Heart left ventricle (tissue), 16 donors: ENCODE measurements at regions of chr11 and their contacts with region 1.

Region 1: DNA sequence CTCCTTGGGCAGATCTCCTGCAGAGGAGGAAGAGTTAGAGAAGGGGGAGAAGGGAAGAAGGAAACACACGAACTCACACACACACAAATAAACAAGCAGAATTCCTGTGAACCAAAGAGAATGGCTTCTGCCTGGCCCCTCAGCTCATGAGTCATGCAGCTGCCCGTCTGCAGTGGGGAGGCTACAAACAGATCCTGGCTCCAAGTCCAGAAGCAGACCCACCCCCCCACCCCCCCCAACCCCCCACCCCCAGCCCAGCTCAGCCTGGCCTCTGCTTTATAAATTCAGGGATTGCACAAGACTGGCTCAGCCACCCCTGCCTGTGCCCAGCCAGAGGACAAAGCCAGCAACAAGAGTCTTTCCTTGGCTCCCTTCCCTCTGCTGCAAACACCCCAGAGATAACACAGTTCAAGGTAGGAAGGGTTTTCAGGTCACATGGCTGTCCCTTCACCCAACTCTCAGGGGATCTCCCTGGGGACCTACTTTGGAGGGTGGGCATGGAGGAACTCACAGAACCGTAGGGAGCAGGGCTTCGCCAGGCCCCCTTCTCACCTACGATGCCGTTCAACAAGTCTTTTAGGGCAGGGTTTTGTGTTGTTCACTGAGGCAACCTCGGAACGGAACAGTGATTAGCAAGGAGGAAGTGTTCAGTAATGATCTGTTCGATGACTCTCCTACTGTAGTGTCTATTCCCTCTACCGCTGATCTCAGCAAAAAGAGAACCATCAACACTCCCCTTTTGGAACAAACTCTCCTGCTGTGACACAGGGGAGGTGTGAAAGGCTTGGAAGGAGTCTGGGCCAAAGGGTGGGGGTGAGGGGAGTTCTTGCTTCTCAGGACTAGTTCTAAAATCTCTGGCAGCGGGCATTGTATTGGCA is 35.5 kb downstream of the RPL27A start:
- DNase-seq: peak in 4 of 5 donors; percentile 36 to 82 (median 59)
- ATAC-seq: peak; percentile 77 to 82 (median 80)
- H3K4me3 ChIP-seq: no peak overlapping the region
- H3K27ac ChIP-seq: peak overlapping the region; percentile 50 to 95 (median 80)
- H3K4me1 ChIP-seq: peaks cover 24 to 97% (median 82%) of the 10 kb centered on the region in 12 donors
- H3K27me3 ChIP-seq: no peaks in the 10 kb centered on the region
- CTCF ChIP-seq: no peak
- POLR2A ChIP-seq: no peak

Region 2: DNA sequence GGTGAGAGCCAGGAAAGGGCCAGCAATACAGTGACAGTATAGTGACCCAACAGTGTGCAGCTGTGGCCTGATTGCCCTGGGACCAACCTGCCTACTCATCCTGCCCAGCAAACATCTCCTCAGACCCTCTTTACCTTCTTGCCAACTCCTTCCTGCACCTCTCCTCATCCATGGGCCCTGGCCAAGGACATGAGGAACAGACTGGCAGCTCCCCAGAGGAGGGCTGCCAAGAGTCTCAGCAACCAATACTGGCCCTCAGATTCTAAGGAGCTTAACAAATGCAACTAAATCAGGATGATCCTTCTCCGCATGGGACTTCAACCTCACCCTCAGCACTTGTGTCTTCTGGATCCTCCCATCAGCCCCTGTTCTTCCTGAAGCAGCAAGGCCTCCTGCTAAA is 41.5 kb after region 1 on chr11:
- intact Hi-C with region 1: loop called in 1 of 10 experiments (anchors 5 kb)
- DNase-seq: peak in 2 of 5 donors; percentile 39 to 50
- ATAC-seq: peak in 3 of 4 donors; percentile 45 to 54 (median 45)
- H3K4me3 ChIP-seq: no peak overlapping the region
- H3K27ac ChIP-seq: peak overlapping the region in 9 of 12 donors; percentile 12 to 86 (median 44)
- H3K4me1 ChIP-seq: peaks cover 7 to 91% (median 58%) of the 10 kb centered on the region in 12 donors
- H3K27me3 ChIP-seq: no peaks in the 10 kb centered on the region
- CTCF ChIP-seq: no peak
- POLR2A ChIP-seq: no peak

Region 3: GRCh38 chr11:8768625-8769333 is 50.7 kb after region 1 on chr11:
- intact Hi-C with region 1: loop called in 1 of 10 experiments (anchors 5 kb)
- DNase-seq: peak in 4 of 5 donors; percentile 71 to 88 (median 80)
- ATAC-seq: peak; percentile 90 to 94 (median 93)
- H3K4me3 ChIP-seq: no peak overlapping the region
- H3K27ac ChIP-seq: peak overlapping the region; percentile 31 to 86 (median 72)
- H3K4me1 ChIP-seq: peaks cover 8 to 90% (median 44%) of the 10 kb centered on the region in 12 donors
- H3K27me3 ChIP-seq: no peaks in the 10 kb centered on the region
- CTCF ChIP-seq: peak in 6 of 12 donors; percentile 8 to 43 (median 25)
- POLR2A ChIP-seq: no peak

Region 4: GRCh38 chr11:8794677-8795103 is 76.6 kb after region 1 on chr11:
- intact Hi-C with region 1: loop called in 2 of 10 experiments (anchors 5 to 10 kb)
- DNase-seq: peak in 1 of 5 donors; percentile 39
- ATAC-seq: peak; percentile 79 to 87 (median 86)
- H3K4me3 ChIP-seq: no peak overlapping the region
- H3K27ac ChIP-seq: peak overlapping the region in 11 of 12 donors; percentile 31 to 89 (median 75)
- H3K4me1 ChIP-seq: peaks cover 0 to 51% (median 30%) of the 10 kb centered on the region in 12 donors
- H3K27me3 ChIP-seq: no peaks in the 10 kb centered on the region
- CTCF ChIP-seq: peak; percentile 24 to 60 (median 44)
- POLR2A ChIP-seq: no peak

Region 5: GRCh38 chr11:8870411-8871170 is 152.5 kb after region 1 on chr11:
- intact Hi-C with region 1: no loop called
- DNase-seq: peak; percentile 56 to 76 (median 69)
- ATAC-seq: peak; percentile 32 to 87 (median 74)
- H3K4me3 ChIP-seq: peak overlapping the region; percentile 43 to 97 (median 83)
- H3K27ac ChIP-seq: peak overlapping the region; percentile 43 to 94 (median 84)
- H3K4me1 ChIP-seq: peaks cover 0 to 55% (median 15%) of the 10 kb centered on the region in 12 donors
- H3K27me3 ChIP-seq: peaks cover 0 to 30% (median 0%) of the 10 kb centered on the region in 9 donors
- CTCF ChIP-seq: peak in 1 of 12 donors; percentile 23
- POLR2A ChIP-seq: no peak